Naive thymus-derived CD4-positive, alpha-beta T cell (primary cell): ENCODE measurements at regions of chr3 and their contacts with region 1.

Region 1: DNA sequence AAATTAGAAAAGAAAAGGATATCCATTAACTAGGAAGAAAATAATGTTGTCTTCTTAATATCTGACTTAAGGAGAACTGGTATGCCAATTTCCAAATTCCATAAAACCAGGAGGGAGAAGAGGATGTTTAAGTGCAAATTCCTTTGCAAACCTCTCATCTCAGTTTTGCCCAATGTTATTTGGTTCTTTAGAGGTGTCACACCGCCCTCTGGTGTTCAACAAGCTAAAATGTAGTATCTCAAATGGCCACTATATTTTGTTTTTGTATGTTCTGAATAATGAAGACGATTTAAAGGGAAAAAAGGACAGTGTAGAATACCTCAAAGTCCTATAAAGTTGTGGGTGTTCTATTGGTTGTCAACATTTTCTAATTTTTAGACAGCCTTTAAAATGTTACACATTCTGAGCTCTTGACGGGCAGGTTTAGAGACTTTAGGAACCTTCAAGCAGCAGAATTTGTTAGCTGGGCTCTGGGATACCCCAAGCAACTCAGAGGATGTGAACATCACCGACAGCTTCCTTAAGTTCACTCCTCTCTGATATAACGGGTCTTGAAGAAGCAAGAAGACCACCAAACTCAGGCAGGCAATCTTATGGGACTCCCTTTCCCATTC is 458.3 kb downstream of the MFSD1 start:
- DNase-seq: peak in 6 of 9 donors; percentile 2 to 39 (median 18)
- ATAC-seq: peak; percentile 40
- H3K4me3 ChIP-seq: no peak overlapping the region
- H3K4me3 Mint-ChIP-seq: no peak overlapping the region
- H3K27ac ChIP-seq: no peak overlapping the region
- H3K27ac Mint-ChIP-seq: no peak overlapping the region
- H3K4me1 ChIP-seq: no peaks in the 10 kb centered on the region
- H3K4me1 Mint-ChIP-seq: no peaks in the 10 kb centered on the region
- H3K27me3 ChIP-seq: no peaks in the 10 kb centered on the region
- H3K27me3 Mint-ChIP-seq: peaks cover 4 to 37% (median 5%) of the 10 kb centered on the region in 5 donors

Region 2: GRCh38 chr3:157618075-157618760 is 1641.9 kb before region 1 on chr3:
- CTCF ChIA-PET with region 1: no interaction called
- POLR2A ChIA-PET with region 1: no interaction called
- intact Hi-C with region 1: loop called in 1 of 2 experiments (anchors 5 kb)
- DNase-seq: peak in 6 of 9 donors; percentile 4 to 44 (median 24)
- ATAC-seq: peak; percentile 78
- H3K4me3 ChIP-seq: no peak overlapping the region
- H3K4me3 Mint-ChIP-seq: peak overlapping the region in 1 of 10 donors; percentile 3
- H3K27ac ChIP-seq: no peak overlapping the region
- H3K27ac Mint-ChIP-seq: peak overlapping the region in 1 of 9 donors; percentile 5
- H3K4me1 ChIP-seq: peaks cover 0 to 4% of the 10 kb centered on the region in 2 donors
- H3K4me1 Mint-ChIP-seq: peaks cover 0 to 6% (median 5%) of the 10 kb centered on the region in 7 donors
- H3K27me3 ChIP-seq: no peaks in the 10 kb centered on the region
- H3K27me3 Mint-ChIP-seq: peaks cover 10 to 22% (median 13%) of the 10 kb centered on the region in 5 donors

Region 3: GRCh38 chr3:158845765-158846350 is 414.3 kb before region 1 on chr3:
- CTCF ChIA-PET with region 1: interaction called, 17 read pairs
- POLR2A ChIA-PET with region 1: no interaction called
- intact Hi-C with region 1: loop called in 1 of 2 experiments (anchors 1 kb)
- DNase-seq: peak in 7 of 9 donors; percentile 14 to 57 (median 44)
- ATAC-seq: peak; percentile 56
- H3K4me3 ChIP-seq: no peak overlapping the region
- H3K4me3 Mint-ChIP-seq: peak overlapping the region in 1 of 10 donors; percentile 26
- H3K27ac ChIP-seq: no peak overlapping the region
- H3K27ac Mint-ChIP-seq: peak overlapping the region in 2 of 9 donors; percentile 10 to 38
- H3K4me1 ChIP-seq: no peaks in the 10 kb centered on the region
- H3K4me1 Mint-ChIP-seq: peaks cover 0 to 22% (median 12%) of the 10 kb centered on the region in 7 donors
- H3K27me3 ChIP-seq: no peaks in the 10 kb centered on the region
- H3K27me3 Mint-ChIP-seq: no peaks in the 10 kb centered on the region

Region 4: GRCh38 chr3:158916111-158916510 is 344.0 kb before region 1 on chr3:
- CTCF ChIA-PET with region 1: no interaction called
- POLR2A ChIA-PET with region 1: no interaction called
- intact Hi-C with region 1: loop called in 1 of 2 experiments (anchors 2 kb)
- DNase-seq: no peak
- ATAC-seq: no peak
- H3K4me3 ChIP-seq: no peak overlapping the region
- H3K4me3 Mint-ChIP-seq: no peak overlapping the region
- H3K27ac ChIP-seq: no peak overlapping the region
- H3K27ac Mint-ChIP-seq: no peak overlapping the region
- H3K4me1 ChIP-seq: no peaks in the 10 kb centered on the region
- H3K4me1 Mint-ChIP-seq: no peaks in the 10 kb centered on the region
- H3K27me3 ChIP-seq: no peaks in the 10 kb centered on the region
- H3K27me3 Mint-ChIP-seq: peaks cover 0 to 11% (median 0%) of the 10 kb centered on the region in 5 donors

Region 5: DNA sequence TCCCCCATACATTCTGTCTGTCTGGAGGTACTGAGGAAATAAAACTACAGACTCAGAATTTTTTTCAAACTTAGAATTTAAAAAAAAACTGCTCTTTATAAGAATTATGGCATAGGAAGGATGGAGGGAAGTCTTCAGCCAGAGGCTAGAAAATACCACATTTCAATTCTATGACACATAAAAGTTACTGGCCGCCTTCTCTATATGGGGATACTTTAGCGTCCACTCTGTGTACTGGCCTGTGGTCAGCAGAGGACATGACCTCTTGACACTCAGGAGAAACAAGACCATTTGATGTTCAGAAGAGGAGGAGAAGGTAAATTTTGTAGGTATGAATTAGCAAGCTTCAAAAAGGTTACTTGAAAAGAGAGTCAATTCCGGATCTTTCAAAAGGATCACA is 40.9 kb before region 1 on chr3:
- CTCF ChIA-PET with region 1: no interaction called
- POLR2A ChIA-PET with region 1: no interaction called
- intact Hi-C with region 1: no loop called
- DNase-seq: no peak
- ATAC-seq: no peak
- H3K4me3 ChIP-seq: no peak overlapping the region
- H3K4me3 Mint-ChIP-seq: no peak overlapping the region
- H3K27ac ChIP-seq: no peak overlapping the region
- H3K27ac Mint-ChIP-seq: no peak overlapping the region
- H3K4me1 ChIP-seq: no peaks in the 10 kb centered on the region
- H3K4me1 Mint-ChIP-seq: no peaks in the 10 kb centered on the region
- H3K27me3 ChIP-seq: no peaks in the 10 kb centered on the region
- H3K27me3 Mint-ChIP-seq: peaks cover 0 to 15% (median 9%) of the 10 kb centered on the region in 5 donors

Region 6: GRCh38 chr3:159804726-159805410 is 544.7 kb after region 1 on chr3:
- CTCF ChIA-PET with region 1: no interaction called
- POLR2A ChIA-PET with region 1: no interaction called
- intact Hi-C with region 1: loop called in 1 of 2 experiments (anchors 1 kb)
- DNase-seq: peak in 1 of 9 donors; percentile 8
- ATAC-seq: peak; percentile 48
- H3K4me3 ChIP-seq: no peak overlapping the region
- H3K4me3 Mint-ChIP-seq: no peak overlapping the region
- H3K27ac ChIP-seq: no peak overlapping the region
- H3K27ac Mint-ChIP-seq: no peak overlapping the region
- H3K4me1 ChIP-seq: no peaks in the 10 kb centered on the region
- H3K4me1 Mint-ChIP-seq: no peaks in the 10 kb centered on the region
- H3K27me3 ChIP-seq: no peaks in the 10 kb centered on the region
- H3K27me3 Mint-ChIP-seq: peaks cover 0 to 17% (median 9%) of the 10 kb centered on the region in 5 donors